Posterior vena cava (tissue), 2 donors: ENCODE measurements at regions of chr6 and their contacts with region 1.

Region 1: GRCh38 chr6:1609648-1610496 is at the start of gene FOXC1:
- DNase-seq: peak; percentile 97
- total RNA-seq, gene FOXC1: 27.6 to 33.5 TPM

Region 2: GRCh38 chr6:1298768-1299167 is 311.1 kb before region 1 on chr6:
- intact Hi-C with region 1: no loop called
- DNase-seq: no peak

Region 3: GRCh38 chr6:1796706-1797529 is 187.0 kb after region 1 on chr6:
- intact Hi-C with region 1: no loop called
- DNase-seq: no peak

Region 4: GRCh38 chr6:2103644-2104523 is 494.0 kb after region 1 on chr6:
- intact Hi-C with region 1: loop called in 1 of 2 experiments (anchors 5 kb)
- DNase-seq: no peak

Region 5: GRCh38 chr6:2353412-2354137 is 743.7 kb after region 1 on chr6:
- intact Hi-C with region 1: loop called in 1 of 2 experiments (anchors 10 kb)
- DNase-seq: no peak

Region 6: GRCh38 chr6:2434912-2435311 is 825.0 kb after region 1 on chr6:
- intact Hi-C with region 1: loop called in 1 of 2 experiments (anchors 5 kb)
- DNase-seq: no peak

Region 7: GRCh38 chr6:2634139-2634964 is 1024.5 kb after region 1 on chr6:
- intact Hi-C with region 1: loop called in 1 of 2 experiments (anchors 10 kb)
- DNase-seq: peak; percentile 97